ENCODE measurements at regions of chr12 and their contacts with region 1.

Region 1: GRCh38 chr12:128797119-128798118 is 26.3 kb downstream of the SLC15A4 start:
- DNase-seq: peak; percentile 61 to 72
- ATAC-seq: peak; percentile 18 to 57
- H3K4me3 ChIP-seq: no peak overlapping the region
- H3K27ac ChIP-seq: peak overlapping the region; percentile 86 to 98 (median 96)
- H3K4me1 ChIP-seq: peaks cover 55 to 74% of the 10 kb centered on the region in 2 donors
- H3K27me3 ChIP-seq: no peaks in the 10 kb centered on the region
- CTCF ChIP-seq: no peak
- POLR2A ChIP-seq: peak; percentile 28 to 55

Region 2: GRCh38 chr12:128823916-128824839 is 26.8 kb after region 1 on chr12 and contains the start of gene SLC15A4:
- in situ Hi-C with region 1: no loop called
- intact Hi-C with region 1: loop called (anchors 1 kb)
- DNase-seq: peak; percentile 96 to 97
- ATAC-seq: peak; percentile 69 to 72
- H3K4me3 ChIP-seq: peak within 1 kb of the TSS; percentile 85 to 93 (median 86)
- H3K27ac ChIP-seq: peak within 1 kb of the TSS; percentile 86 to 98 (median 96)
- H3K4me1 ChIP-seq: peaks cover 48 to 53% of the 10 kb centered on the region in 2 donors
- H3K27me3 ChIP-seq: no peaks in the 10 kb centered on the region
- CTCF ChIP-seq: peak in 4 of 5 experiments; percentile 20 to 34 (median 29)
- POLR2A ChIP-seq: peak; percentile 97 to 99
- total RNA-seq, gene SLC15A4: 59.8 to 122 (median 79.1) TPM

Region 3: DNA sequence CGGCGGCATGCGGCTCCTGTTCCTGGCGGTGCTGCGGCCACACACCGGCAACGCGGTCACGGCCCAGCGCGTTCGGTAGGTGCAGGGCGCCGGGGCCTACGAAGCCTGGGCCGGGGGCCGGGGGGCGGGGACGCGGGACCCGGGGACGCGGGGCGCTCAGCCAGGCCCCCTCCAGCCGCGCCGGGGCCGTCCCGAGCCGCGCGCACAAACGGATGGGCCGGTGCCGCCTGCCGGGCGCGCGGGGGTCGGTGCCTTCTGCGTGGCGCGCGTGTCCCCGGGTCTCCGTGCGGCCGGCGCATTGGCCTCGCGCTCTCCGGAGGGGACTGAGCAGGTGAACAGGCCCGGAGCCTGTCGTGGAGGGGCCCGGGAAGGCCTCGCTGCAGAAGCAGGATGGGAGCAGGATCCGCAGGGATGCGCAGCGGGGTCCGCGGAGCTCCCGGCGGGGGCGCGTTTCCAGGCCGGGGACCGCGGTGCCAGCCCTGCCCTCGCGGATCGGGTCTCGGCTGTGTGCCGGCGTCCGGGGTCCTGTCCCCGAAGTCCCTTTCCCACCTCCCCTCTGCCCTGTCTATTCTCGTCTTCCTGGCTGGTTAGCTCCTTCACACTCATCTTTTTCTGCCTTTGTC is 56.3 kb after region 1 on chr12:
- in situ Hi-C with region 1: no loop called
- intact Hi-C with region 1: no loop called
- DNase-seq: no peak
- ATAC-seq: peak; percentile 24 to 37
- H3K4me3 ChIP-seq: peak overlapping the region; percentile 36 to 54 (median 47)
- H3K27ac ChIP-seq: no peak overlapping the region
- H3K4me1 ChIP-seq: no peaks in the 10 kb centered on the region
- H3K27me3 ChIP-seq: peaks cover 2 to 6% (median 6%) of the 10 kb centered on the region in 3 donors
- CTCF ChIP-seq: no peak
- POLR2A ChIP-seq: no peak